Activated T-helper 2 cell treated with anti-CD3 and anti-CD28 coated beads, Interferon-gamma antibody, Interleukin-2, Interleukin-4, amounts not matched to agents 10 μg/mL and 5 μg/mL and 100 μg/mL, durations not matched to agents 14 hours and 24 hours and 36 hours (primary cell): ENCODE measurements at regions of chr6 and their contacts with region 1.

Region 1: GRCh38 chr6:14066782-14067406 is 50.7 kb upstream of the CD83 start:
- DNase-seq: no peak
- H3K4me3 Mint-ChIP-seq: peak overlapping the region; percentile 32
- H3K27ac Mint-ChIP-seq: peak overlapping the region; percentile 74
- H3K4me1 Mint-ChIP-seq: peaks cover 41% of the 10 kb centered on the region
- H3K27me3 Mint-ChIP-seq: peaks cover 17% of the 10 kb centered on the region

Region 2: DNA sequence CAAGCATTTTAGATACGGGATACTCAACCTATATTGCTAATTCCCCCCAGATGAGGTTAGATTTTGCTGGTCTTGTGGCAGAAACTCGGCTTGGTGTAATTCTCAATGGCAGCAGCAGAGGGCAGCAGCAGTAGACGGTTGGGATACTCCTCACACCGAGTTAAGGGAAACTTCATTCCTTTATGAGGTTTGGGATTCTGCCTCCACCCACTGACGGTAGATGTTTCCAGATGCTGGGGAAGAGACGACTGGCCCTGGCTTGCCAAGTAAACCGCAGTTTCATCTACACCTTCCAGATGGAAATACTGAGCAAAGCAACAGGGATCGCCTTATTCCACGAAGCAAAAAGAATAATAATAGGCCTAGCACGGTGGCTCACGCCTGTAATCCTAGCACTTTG is 730.3 kb before region 1 on chr6:
- intact Hi-C with region 1: loop called (anchors 5 kb)
- DNase-seq: peak; percentile 63
- H3K4me3 Mint-ChIP-seq: no peak overlapping the region
- H3K27ac Mint-ChIP-seq: no peak overlapping the region
- H3K4me1 Mint-ChIP-seq: peaks cover 31% of the 10 kb centered on the region
- H3K27me3 Mint-ChIP-seq: peaks cover 1% of the 10 kb centered on the region

Region 3: DNA sequence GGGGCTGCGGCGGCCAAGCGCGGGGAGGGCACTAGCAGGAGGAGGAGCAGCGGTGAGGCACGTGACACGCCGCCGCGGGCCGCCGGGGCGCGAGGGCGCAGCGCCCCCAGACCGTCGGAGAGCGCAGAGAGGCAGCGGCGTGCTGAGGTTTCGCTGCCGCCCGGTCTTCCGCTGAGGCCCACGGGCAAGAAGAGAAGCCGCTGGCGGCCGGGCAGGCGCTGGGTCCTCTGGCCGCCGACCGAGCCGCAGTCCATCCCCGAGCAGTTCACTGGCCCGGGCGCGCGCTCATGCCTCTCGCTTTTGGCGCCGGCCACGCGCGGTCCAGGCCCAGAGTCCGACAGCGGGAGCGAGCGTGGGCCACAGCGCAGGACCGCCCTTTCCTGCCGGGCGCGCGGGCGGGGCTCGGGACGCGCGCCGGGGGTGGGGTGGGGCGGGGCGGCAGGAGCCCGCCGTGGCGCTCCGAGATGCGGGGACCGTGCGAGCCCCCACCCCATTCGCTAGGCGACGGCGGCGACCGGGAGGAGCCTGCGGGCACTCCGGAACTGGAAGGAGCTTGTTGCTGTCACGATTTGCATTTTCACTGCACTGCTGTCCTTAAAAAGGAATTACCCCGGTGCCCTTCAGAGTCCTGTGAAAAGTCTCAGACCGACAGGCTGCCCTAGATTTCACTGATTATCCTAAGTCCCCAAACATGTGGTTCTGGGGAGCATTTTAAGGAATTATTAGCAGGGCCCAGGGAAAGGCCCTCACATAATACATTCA is 252.5 kb before region 1 on chr6 and contains the start of gene MCUR1:
- intact Hi-C with region 1: loop called (anchors 5 kb)
- DNase-seq: peak; percentile 81
- H3K4me3 Mint-ChIP-seq: peak within 1 kb of the TSS; percentile 90
- H3K27ac Mint-ChIP-seq: peak within 1 kb of the TSS; percentile 77
- H3K4me1 Mint-ChIP-seq: peaks cover 34% of the 10 kb centered on the region
- H3K27me3 Mint-ChIP-seq: peaks cover 11% of the 10 kb centered on the region
- total RNA-seq, gene MCUR1: 39.8 and 41.4 TPM in 2 replicates

Region 4: DNA sequence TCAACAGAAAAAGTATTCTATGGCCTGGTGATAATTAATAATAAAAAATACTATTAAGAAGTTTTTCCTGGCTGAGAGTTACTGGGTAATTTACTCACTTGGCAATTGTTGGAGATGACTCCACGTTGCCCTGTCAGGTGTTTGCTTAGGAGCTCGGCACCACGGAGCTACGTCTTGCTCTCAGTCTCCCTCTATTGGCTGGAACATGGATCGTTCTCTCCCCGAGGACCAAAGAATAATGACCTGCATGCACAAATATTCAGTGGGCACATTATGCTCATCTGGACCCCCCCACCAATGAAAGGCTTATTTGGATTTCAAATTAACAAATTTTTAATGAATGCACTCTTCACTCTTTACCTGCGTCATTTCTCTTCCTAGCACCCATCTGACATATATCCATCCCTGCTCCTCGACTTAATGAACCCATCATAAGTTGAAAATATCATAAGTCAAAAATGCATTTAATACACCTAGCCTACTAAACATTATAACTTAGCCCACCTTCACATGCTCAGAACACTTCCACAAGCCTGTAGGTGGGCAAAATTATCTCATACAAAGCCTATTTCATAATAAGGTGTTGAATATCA is 20.3 kb before region 1 on chr6:
- intact Hi-C with region 1: loop called (anchors 2 kb)
- DNase-seq: peak; percentile 31
- H3K4me3 Mint-ChIP-seq: no peak overlapping the region
- H3K27ac Mint-ChIP-seq: no peak overlapping the region
- H3K4me1 Mint-ChIP-seq: no peaks in the 10 kb centered on the region
- H3K27me3 Mint-ChIP-seq: peaks cover 48% of the 10 kb centered on the region

Region 5: DNA sequence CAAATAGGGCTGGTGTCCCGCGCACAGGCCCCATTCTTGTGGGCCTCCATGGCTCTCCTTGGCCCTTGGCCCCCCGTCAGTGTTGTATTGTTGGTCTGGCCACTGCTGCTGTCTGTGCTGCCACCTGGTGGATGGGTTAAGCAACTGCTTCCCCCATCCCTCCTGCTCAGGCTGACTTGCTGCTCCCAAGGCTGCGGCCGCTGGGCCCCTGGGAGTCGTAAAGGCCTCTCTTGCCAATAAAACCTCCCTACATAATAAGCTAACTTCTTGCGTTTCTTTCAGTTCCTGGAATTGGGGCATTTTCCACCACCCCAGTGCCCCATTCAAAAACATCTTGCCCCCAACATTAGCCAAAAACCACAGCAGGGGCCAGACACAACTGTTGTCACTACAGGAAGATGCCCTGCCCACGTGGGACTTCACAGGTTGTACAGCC is 77.8 kb after region 1 on chr6:
- intact Hi-C with region 1: loop called (anchors 5 kb)
- DNase-seq: peak; percentile 50
- H3K4me3 Mint-ChIP-seq: no peak overlapping the region
- H3K27ac Mint-ChIP-seq: no peak overlapping the region
- H3K4me1 Mint-ChIP-seq: peaks cover 13% of the 10 kb centered on the region
- H3K27me3 Mint-ChIP-seq: no peaks in the 10 kb centered on the region